Pancreas (tissue), 10 donors: ENCODE measurements at regions of chr5 and their contacts with region 1.

Region 1: GRCh38 chr5:39547553-39548154 is 122.9 kb upstream of the DAB2 start:
- DNase-seq: peak in 3 of 6 donors; percentile 18 to 29 (median 18)
- ATAC-seq: peak; percentile 61 to 92 (median 88)
- H3K4me3 ChIP-seq: no peak overlapping the region
- H3K27ac ChIP-seq: no peak overlapping the region
- H3K4me1 ChIP-seq: no peaks in the 10 kb centered on the region
- H3K27me3 ChIP-seq: no peaks in the 10 kb centered on the region
- CTCF ChIP-seq: peak in 3 of 4 donors; percentile 40 to 57 (median 47)

Region 2: DNA sequence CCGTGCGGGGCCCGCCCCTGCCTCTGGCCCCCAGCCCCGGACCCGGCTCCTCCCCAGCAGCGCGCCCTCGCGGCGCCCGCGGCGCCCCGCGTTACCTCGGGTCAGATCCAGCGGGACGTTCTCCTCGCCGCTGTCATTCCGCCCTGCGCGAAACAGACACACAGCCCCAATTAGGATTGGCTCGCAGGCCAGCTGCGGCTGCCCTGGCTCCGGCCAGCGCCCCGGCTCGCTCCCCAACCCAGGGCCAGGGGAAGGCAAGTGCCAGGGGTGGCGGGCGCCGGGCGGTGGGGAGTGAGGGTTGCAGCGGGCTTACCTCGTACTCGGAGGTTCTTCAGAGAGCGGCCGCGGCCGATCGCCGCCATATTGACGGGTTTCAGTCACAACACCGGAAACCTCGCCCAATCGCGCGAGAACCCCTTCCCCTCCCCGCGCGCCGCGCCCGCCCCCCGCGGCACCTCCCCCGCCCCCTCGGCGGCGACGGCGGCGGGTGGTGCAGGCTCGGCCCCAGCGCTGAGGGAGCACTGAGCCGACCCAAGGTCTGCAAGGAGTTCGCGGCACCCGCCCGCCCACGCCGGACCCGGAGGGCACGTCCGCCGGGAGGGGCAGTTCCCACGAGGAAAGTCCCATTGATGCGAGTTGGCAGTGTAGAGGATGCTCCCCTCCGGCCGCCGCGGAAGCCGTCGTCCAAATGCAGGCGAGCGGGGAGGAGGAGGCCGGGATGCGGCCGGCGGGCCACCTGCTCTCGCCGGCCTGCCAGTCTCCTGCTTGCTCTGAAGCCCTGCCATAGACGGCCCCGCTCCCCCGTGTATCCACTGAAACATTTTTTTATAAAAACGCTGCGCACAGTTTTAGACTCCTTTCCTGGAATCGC is 473.4 kb before region 1 on chr5 and contains the start of gene RICTOR:
- intact Hi-C with region 1: no loop called
- DNase-seq: peak; percentile 84 to 96 (median 90)
- ATAC-seq: peak; percentile 88 to 94 (median 94)
- H3K4me3 ChIP-seq: peak within 1 kb of the TSS; percentile 77 to 94 (median 90)
- H3K27ac ChIP-seq: peak within 1 kb of the TSS; percentile 92 to 99 (median 98)
- H3K4me1 ChIP-seq: peaks cover 9 to 15% (median 14%) of the 10 kb centered on the region in 3 donors
- H3K27me3 ChIP-seq: no peaks in the 10 kb centered on the region
- CTCF ChIP-seq: no peak
- total RNA-seq, gene RICTOR: 13.1 to 23.0 (median 15.3) TPM

Region 3: DNA sequence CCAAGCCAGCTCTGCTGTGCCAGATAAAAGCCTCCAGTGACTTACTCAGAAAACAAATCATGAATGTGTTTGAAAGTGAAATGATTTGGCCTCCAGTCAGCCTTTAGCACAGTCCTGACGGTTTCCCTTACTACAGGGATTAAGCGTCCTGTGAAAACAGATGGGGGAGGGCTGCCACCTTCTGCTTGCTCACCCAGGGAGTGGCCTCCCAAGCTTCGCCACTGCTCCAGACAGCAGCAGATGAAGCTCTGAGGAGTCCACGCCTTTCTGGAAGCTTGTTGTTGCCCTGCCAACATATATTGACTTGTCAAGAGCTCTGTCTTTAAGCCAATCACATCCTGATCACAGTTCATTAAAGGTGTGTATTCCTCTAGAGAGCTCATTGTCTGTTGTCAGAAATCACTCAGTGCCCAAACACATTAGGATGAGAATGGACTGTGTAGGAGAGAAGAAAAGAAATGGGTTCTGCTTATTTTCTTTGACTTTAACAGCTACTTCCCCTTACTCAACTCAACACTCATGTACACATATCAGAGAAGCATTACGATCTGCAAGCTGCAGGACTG is 323.4 kb before region 1 on chr5:
- intact Hi-C with region 1: loop called in 1 of 3 experiments (anchors 10 kb)
- DNase-seq: no peak
- ATAC-seq: peak in 3 of 4 donors; percentile 32 to 68 (median 67)
- H3K4me3 ChIP-seq: no peak overlapping the region
- H3K27ac ChIP-seq: peak overlapping the region in 1 of 4 donors; percentile 2
- H3K4me1 ChIP-seq: no peaks in the 10 kb centered on the region
- H3K27me3 ChIP-seq: no peaks in the 10 kb centered on the region
- CTCF ChIP-seq: no peak

Region 4: GRCh38 chr5:39376293-39376714 is 171.3 kb before region 1 on chr5:
- intact Hi-C with region 1: loop called in 2 of 3 experiments (anchors 5 kb)
- DNase-seq: peak in 2 of 6 donors; percentile 9 to 52
- ATAC-seq: peak; percentile 56 to 83 (median 76)
- H3K4me3 ChIP-seq: no peak overlapping the region
- H3K27ac ChIP-seq: no peak overlapping the region
- H3K4me1 ChIP-seq: no peaks in the 10 kb centered on the region
- H3K27me3 ChIP-seq: no peaks in the 10 kb centered on the region
- CTCF ChIP-seq: peak; percentile 45 to 72 (median 50)